ENCODE measurements at regions of chr13 and their contacts with region 1.

Region 1: GRCh38 chr13:25114220-25114619 is 18.3 kb downstream of the PABPC3 start:
- DNase-seq: peak; percentile 81 to 84
- H3K4me3 ChIP-seq: no peak overlapping the region
- H3K4me1 ChIP-seq: peaks cover 4% of the 10 kb centered on the region; the same call in 1 of the 2 replicates
- H3K27me3 ChIP-seq: no peaks in the 10 kb centered on the region

Region 2: GRCh38 chr13:25001476-25002206 is 112.6 kb before region 1 on chr13:
- in situ Hi-C with region 1: loop called (anchors 10 kb)
- DNase-seq: no peak
- H3K4me3 ChIP-seq: no peak overlapping the region
- H3K4me1 ChIP-seq: peaks cover 6% of the 10 kb centered on the region
- H3K27me3 ChIP-seq: no peaks in the 10 kb centered on the region

Region 3: GRCh38 chr13:25406377-25406915 is 292.2 kb after region 1 on chr13:
- in situ Hi-C with region 1: no loop called
- DNase-seq: peak in 1 of 2 experiments; percentile 9
- H3K4me3 ChIP-seq: no peak overlapping the region
- H3K4me1 ChIP-seq: no peaks in the 10 kb centered on the region
- H3K27me3 ChIP-seq: no peaks in the 10 kb centered on the region; the same call in 1 of the 2 replicates